Adrenal gland (tissue), 19 donors: ENCODE measurements at regions of chr14 and their contacts with region 1.

Region 1: DNA sequence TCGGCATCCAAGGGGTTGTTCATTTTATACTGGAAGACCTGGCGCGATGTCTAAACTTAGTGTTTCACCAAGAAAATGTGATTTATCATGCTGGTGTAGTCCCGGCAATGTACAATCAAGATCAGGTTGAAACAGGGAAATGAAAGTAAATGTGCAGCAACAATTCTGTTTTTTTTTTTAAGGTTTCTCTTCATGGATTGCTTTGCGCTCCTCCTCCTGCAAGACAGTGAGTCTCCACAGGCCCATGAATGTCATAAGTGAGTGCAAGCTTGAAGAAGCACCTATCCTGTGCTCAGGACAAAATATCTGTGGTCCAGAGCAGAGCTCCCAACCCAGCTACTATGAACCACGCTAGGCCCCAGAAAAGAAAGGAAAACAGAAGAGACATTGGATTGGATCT is 143.4 kb downstream of the KCNK10 start:
- DNase-seq: no peak
- H3K4me3 ChIP-seq: no peak overlapping the region
- H3K27ac ChIP-seq: no peak overlapping the region
- H3K4me1 ChIP-seq: no peaks in the 10 kb centered on the region
- H3K27me3 ChIP-seq: no peaks in the 10 kb centered on the region
- CTCF ChIP-seq: no peak
- POLR2A ChIP-seq: no peak

Region 2: GRCh38 chr14:87944987-87945604 is 234.6 kb before region 1 on chr14:
- intact Hi-C with region 1: loop called in 1 of 2 experiments (anchors 10 kb)
- DNase-seq: no peak
- H3K4me3 ChIP-seq: no peak overlapping the region
- H3K27ac ChIP-seq: no peak overlapping the region
- H3K4me1 ChIP-seq: no peaks in the 10 kb centered on the region
- H3K27me3 ChIP-seq: no peaks in the 10 kb centered on the region
- CTCF ChIP-seq: peak; percentile 49 to 81 (median 66)
- POLR2A ChIP-seq: no peak

Region 3: DNA sequence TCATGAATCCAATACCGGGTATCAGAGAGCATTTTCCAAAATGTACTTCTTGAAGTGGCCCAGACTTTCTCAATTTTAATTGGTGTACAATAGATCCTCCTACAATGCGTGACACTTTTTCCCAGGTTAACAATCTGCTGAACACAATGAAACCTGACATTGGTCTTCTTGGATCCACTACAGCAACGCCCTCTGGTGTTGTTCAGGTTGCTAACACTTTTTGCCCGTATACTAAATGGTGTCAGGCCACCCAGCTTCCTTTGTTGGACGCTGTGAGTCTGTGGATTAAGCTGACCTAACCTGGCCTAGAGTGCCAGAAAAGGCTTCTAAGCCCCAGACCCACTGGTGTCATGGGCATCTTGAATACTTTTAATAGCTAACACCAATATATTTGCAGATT is 54.2 kb after region 1 on chr14:
- intact Hi-C with region 1: no loop called
- DNase-seq: peak in 1 of 7 donors; percentile 26
- H3K4me3 ChIP-seq: no peak overlapping the region
- H3K27ac ChIP-seq: no peak overlapping the region
- H3K4me1 ChIP-seq: no peaks in the 10 kb centered on the region
- H3K27me3 ChIP-seq: no peaks in the 10 kb centered on the region
- CTCF ChIP-seq: peak in 3 of 6 experiments; percentile 15 to 16 (median 15)
- POLR2A ChIP-seq: no peak